ENCODE measurements at regions of chr11 and their contacts with region 1.

Region 1: GRCh38 chr11:114180301-114181055 is 115.7 kb upstream of the NNMT start:
- DNase-seq: no peak
- ATAC-seq: no peak
- H3K4me3 Mint-ChIP-seq: no peak overlapping the region
- H3K27ac Mint-ChIP-seq: peak overlapping the region; percentile 69
- H3K4me1 Mint-ChIP-seq: peaks cover 81% of the 10 kb centered on the region
- H3K27me3 Mint-ChIP-seq: no peaks in the 10 kb centered on the region

Region 2: DNA sequence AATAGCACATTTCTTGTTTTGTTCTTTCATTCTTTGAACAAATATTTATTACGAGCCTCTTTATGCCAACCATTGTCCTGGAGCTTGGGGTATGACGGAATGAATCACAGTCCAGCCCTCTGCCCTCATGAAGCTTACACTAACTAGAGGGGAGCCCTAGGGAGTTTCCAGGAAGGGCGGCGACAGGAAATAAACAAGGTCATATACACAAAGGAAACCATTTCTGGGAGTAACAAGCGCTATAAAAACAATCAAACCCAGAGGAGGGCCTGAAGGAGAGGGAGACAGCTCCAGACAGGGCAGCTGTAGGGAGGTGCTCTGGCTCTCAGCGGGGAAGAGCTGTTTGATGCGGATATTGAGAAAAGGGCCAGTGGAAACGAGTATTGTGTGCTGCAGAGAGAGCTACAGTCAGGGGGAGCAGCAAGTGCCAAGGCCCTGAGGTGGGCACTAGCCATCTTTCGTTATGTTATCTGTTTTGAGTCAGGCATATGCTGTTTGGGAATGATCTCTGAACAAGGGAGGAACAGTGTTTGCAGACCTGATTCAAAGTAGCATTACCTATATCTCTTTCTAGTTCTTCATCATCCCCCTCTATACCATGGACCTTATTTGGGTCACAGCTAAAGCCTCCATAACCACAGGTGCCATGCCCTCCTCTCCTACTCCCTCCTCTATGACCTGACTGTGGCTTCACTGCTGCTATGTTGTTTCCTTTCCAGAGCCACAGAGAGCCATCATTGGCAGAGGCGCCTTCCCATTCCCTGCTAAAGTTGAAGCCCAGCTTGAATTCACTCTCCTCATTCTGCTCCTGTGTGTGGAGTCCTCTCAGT is 136.2 kb before region 1 on chr11:
- CTCF ChIA-PET with region 1: interaction called, 4 read pairs
- POLR2A ChIA-PET with region 1: interaction called, 11 read pairs
- DNase-seq: no peak
- ATAC-seq: peak; percentile 49
- H3K4me3 Mint-ChIP-seq: no peak overlapping the region
- H3K27ac Mint-ChIP-seq: peak overlapping the region; percentile 26
- H3K4me1 Mint-ChIP-seq: peaks cover 17% of the 10 kb centered on the region
- H3K27me3 Mint-ChIP-seq: peaks cover 17% of the 10 kb centered on the region

Region 3: GRCh38 chr11:114159802-114160632 is 20.5 kb before region 1 on chr11:
- CTCF ChIA-PET with region 1: interaction called, 89 read pairs
- POLR2A ChIA-PET with region 1: interaction called, 8 read pairs
- DNase-seq: peak; percentile 97
- ATAC-seq: peak; percentile 96
- H3K4me3 Mint-ChIP-seq: peak overlapping the region; percentile 58
- H3K27ac Mint-ChIP-seq: peak overlapping the region; percentile 87
- H3K4me1 Mint-ChIP-seq: peaks cover 76% of the 10 kb centered on the region
- H3K27me3 Mint-ChIP-seq: no peaks in the 10 kb centered on the region

Region 4: DNA sequence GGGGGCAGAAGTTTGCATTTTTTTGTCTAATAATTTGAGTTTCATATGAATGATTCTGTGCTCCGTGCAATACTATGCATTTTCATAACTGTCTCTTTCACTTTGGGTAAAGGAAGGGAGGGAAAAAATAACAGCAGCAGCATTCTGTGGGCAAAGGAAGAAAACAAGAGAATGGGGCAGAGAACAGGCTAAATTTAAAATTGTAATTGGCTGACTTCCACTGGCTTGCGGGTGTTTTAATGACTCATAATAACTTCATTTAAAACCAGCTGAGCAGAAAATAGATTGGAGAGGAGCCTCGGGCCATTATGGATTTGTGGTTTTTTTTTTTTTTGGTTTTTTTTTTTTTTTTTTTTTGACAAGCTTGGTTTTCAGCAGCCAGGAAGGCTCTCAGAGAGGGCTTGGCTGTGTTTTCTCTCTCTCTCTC is 13.6 kb before region 1 on chr11:
- CTCF ChIA-PET with region 1: interaction called, 89 read pairs
- POLR2A ChIA-PET with region 1: interaction called, 18 read pairs
- DNase-seq: peak; percentile 48
- ATAC-seq: peak; percentile 62
- H3K4me3 Mint-ChIP-seq: peak overlapping the region; percentile 33
- H3K27ac Mint-ChIP-seq: peak overlapping the region; percentile 77
- H3K4me1 Mint-ChIP-seq: peaks cover 93% of the 10 kb centered on the region
- H3K27me3 Mint-ChIP-seq: no peaks in the 10 kb centered on the region

Region 5: GRCh38 chr11:114197799-114198500 is 17.5 kb after region 1 on chr11:
- CTCF ChIA-PET with region 1: interaction called, 73 read pairs
- POLR2A ChIA-PET with region 1: interaction called, 4 read pairs
- DNase-seq: no peak
- ATAC-seq: no peak
- H3K4me3 Mint-ChIP-seq: no peak overlapping the region
- H3K27ac Mint-ChIP-seq: no peak overlapping the region
- H3K4me1 Mint-ChIP-seq: peaks cover 40% of the 10 kb centered on the region
- H3K27me3 Mint-ChIP-seq: no peaks in the 10 kb centered on the region

Region 6: GRCh38 chr11:114215871-114216795 is 35.7 kb after region 1 on chr11:
- CTCF ChIA-PET with region 1: interaction called, 14 read pairs
- POLR2A ChIA-PET with region 1: no interaction called
- DNase-seq: no peak
- ATAC-seq: peak; percentile 43
- H3K4me3 Mint-ChIP-seq: peak overlapping the region; percentile 35
- H3K27ac Mint-ChIP-seq: peak overlapping the region; percentile 85
- H3K4me1 Mint-ChIP-seq: peaks cover 72% of the 10 kb centered on the region
- H3K27me3 Mint-ChIP-seq: no peaks in the 10 kb centered on the region

Region 7: DNA sequence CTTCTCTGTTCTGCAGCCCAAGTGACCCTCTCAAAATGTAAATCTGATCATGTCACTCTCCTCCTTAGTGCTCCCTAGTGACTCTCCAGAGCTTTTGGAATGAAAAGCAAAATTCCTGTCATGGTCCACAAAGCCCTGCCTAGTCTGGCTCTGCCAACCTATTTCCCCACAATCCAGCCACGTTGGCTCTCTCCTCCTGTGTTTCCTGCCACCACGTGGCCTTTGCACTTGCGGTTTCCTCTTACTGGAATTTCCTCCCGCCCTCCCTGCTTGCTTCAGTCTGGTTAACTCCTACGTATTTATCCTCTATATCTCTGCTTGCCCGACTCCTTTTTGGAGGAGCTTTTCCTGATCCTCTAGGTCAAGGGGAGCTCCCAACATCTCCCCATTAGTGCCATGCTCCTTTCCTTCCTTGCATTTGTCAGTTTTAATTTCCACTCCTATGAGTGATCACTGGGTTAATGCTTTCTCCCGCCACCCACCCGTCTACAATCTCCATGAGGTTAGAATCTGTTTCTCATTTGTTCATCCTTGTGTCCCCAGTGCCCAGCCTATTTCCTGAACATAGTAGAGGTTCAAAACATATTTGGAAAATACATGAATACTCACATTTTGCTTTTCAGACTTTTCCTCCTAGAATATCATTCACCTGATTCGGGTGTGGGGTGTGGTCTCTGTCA is 127.2 kb after region 1 on chr11:
- CTCF ChIA-PET with region 1: no interaction called
- POLR2A ChIA-PET with region 1: no interaction called
- DNase-seq: no peak
- ATAC-seq: no peak
- H3K4me3 Mint-ChIP-seq: no peak overlapping the region
- H3K27ac Mint-ChIP-seq: no peak overlapping the region
- H3K4me1 Mint-ChIP-seq: peaks cover 4% of the 10 kb centered on the region
- H3K27me3 Mint-ChIP-seq: peaks cover 27% of the 10 kb centered on the region

Measured in activated CD8-positive, alpha-beta T cell treated with anti-CD3 and anti-CD28 coated beads, Interleukin-2, amount 10 ng/mL, durations not matched to agents 7 days and 5 days (primary cell).